K562 (cell line): ENCODE measurements at regions of chr17 and their contacts with region 1.

Region 1: DNA sequence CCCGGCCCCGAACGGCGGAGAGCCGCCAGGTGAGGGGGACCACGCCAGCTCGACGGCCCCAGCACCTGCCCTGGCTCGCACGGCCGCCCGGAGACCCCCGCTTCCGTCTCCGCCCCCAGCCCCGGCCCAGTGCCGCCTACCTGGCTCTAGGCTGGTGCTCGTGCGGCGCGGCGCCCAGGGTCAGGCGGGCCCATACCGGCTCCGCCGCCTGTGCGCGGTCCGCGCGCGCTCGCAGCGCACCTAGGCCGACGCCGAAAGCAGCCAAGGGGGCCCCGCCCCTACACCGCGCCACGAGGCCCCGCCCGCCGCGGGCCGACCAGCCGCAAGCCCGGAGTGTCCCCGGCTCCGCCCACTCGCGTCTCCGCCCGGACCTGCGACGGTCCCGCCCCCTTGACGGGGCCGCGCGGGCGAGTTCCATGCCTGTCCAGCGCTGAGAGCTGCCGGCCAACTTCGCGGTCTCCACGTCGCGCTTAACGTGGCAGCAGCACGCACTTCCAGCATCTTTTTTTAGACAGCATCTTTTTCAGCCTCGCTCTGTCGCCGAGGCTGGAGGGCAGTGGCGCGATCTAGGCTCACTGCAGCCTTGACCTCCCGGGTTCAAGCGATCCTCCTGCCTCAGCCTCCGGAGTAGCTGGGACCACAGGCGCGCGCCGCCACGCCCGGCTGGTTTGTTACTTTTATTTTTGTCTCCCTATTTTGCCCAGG is at the start of gene SLC25A39:
- DNase-seq: peak; percentile 93 to 97 (median 94)
- ATAC-seq: peak; percentile 85
- H3K4me3 ChIP-seq: peak within 1 kb of the TSS; percentile 85
- H3K27ac ChIP-seq: peak within 1 kb of the TSS; percentile 83
- H3K4me1 ChIP-seq: peaks cover 9 to 72% of the 10 kb centered on the region in 2 experiments; a peak in 4 of 5 replicates
- H3K27me3 ChIP-seq: no peaks in the 10 kb centered on the region
- CTCF ChIP-seq: no peak
- EP300 ChIP-seq: no peak
- POLR2A ChIP-seq: peak; percentile 66; the same call in 1 of the 2 replicates
- RAD21 ChIP-seq: no peak; a peak in 1 of 4 replicates
- polyA plus RNA-seq, gene SLC25A39: 4.8 to 6.3 TPM

Region 2: GRCh38 chr17:44287651-44288050 is 37.1 kb before region 1 on chr17:
- CTCF ChIA-PET with region 1: no interaction called
- POLR2A ChIA-PET with region 1: interaction called, 7 read pairs
- in situ Hi-C with region 1: no loop called
- intact Hi-C with region 1: loop called (anchors 1 kb)
- DNase-seq: no peak
- ATAC-seq: peak; percentile 32
- H3K4me3 ChIP-seq: peak overlapping the region; percentile 14; the same call in 1 of the 2 replicates
- H3K27ac ChIP-seq: peak overlapping the region; percentile 93
- H3K4me1 ChIP-seq: peaks cover 43 to 51% of the 10 kb centered on the region in 2 experiments
- H3K27me3 ChIP-seq: no peaks in the 10 kb centered on the region
- CTCF ChIP-seq: no peak
- EP300 ChIP-seq: no peak
- POLR2A ChIP-seq: no peak
- RAD21 ChIP-seq: no peak

Region 3: GRCh38 chr17:44334727-44335126 is 10.0 kb after region 1 on chr17:
- CTCF ChIA-PET with region 1: no interaction called
- POLR2A ChIA-PET with region 1: no interaction called
- in situ Hi-C with region 1: no loop called
- intact Hi-C with region 1: no loop called
- DNase-seq: no peak
- ATAC-seq: no peak
- H3K4me3 ChIP-seq: no peak overlapping the region
- H3K27ac ChIP-seq: no peak overlapping the region
- H3K4me1 ChIP-seq: peaks cover 2 to 3% of the 10 kb centered on the region in 2 experiments; a peak in 4 of 5 replicates
- H3K27me3 ChIP-seq: no peaks in the 10 kb centered on the region
- CTCF ChIP-seq: no peak
- EP300 ChIP-seq: no peak
- POLR2A ChIP-seq: no peak
- RAD21 ChIP-seq: no peak

Region 4: DNA sequence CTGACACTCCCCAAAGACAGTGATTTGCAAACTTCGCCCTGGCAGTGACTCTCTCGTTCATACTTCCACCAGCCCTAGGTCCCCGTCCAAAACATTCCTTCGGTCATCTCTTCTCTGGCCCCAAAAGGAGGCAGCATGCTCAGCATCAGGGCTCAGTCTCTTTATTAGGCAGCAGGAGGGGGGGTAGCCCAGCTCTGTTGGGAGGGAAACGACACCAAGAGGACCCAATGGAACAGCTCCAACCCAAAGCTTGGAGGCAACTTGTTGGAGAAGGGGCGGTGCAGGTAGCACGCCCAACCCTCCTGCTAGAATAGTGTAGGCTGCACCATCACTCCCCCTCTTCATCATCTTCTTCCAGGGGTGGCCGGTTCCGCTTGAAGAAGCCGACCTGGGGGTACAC is 47.3 kb after region 1 on chr17:
- CTCF ChIA-PET with region 1: no interaction called
- POLR2A ChIA-PET with region 1: no interaction called
- in situ Hi-C with region 1: no loop called
- intact Hi-C with region 1: no loop called
- DNase-seq: no peak
- ATAC-seq: no peak
- H3K4me3 ChIP-seq: no peak overlapping the region
- H3K27ac ChIP-seq: no peak overlapping the region
- H3K4me1 ChIP-seq: peaks cover 13 to 29% of the 10 kb centered on the region in 2 experiments
- H3K27me3 ChIP-seq: no peaks in the 10 kb centered on the region; a peak in 1 of 5 replicates
- CTCF ChIP-seq: no peak
- EP300 ChIP-seq: no peak
- POLR2A ChIP-seq: no peak
- RAD21 ChIP-seq: no peak